ENCODE measurements at regions of chr17 and their contacts with region 1.

Region 1: DNA sequence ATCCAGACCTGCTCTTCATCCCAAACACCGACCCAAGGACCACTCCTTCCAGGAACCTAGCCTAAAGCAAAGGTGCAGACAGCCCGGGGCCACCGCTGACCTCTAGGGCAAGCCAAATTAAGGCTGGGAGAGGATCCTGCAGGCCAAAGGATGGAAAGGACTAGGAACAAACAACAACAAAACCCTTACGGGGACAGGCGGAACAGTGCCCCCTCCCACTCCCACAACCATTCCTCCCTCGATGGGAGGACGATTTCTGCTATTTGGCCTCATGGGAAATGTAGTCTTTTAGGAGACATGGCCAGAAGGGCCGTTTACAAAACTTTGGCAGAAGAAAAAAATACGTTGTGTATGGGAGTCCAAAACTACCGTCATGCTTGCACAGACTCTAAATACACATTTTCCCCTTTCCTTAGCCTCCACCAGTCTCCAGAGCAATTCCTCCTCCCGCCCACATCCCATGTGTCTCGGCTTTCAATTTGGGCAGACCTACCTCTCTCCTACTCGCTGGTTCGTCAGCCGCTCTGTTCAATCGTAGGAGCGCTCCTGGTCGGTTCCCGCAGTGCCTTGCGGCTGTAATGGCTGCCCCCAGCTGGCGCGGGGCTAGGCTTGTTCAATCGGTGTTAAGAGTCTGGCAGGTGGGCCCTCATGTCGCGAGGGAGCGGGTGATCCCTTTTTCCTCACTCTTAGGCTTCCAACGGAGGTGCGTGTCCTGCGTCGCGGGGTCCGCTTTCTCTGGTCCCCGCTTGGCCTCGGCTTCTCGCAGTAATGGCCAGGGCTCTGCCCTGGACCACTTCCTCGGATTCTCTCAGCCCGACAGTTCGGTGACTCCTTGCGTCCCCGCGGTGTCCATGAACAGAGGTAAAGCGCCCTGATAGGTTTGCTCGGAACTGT is at the start of gene ERAL1:
- DNase-seq: peak; percentile 92
- H3K4me3 Mint-ChIP-seq: peak within 1 kb of the TSS; percentile 81
- H3K27ac Mint-ChIP-seq: peak within 1 kb of the TSS; percentile 86
- H3K4me1 Mint-ChIP-seq: peaks cover 23% of the 10 kb centered on the region
- H3K27me3 Mint-ChIP-seq: no peaks in the 10 kb centered on the region
- total RNA-seq, gene ERAL1: 43.0 to 48.5 TPM

Region 2: GRCh38 chr17:28871056-28871579 is 16.4 kb after region 1 on chr17:
- CTCF ChIA-PET with region 1: no interaction called
- POLR2A ChIA-PET with region 1: interaction called, 7 read pairs
- intact Hi-C with region 1: loop called (anchors 2 kb)
- DNase-seq: peak; percentile 79
- H3K4me3 Mint-ChIP-seq: no peak overlapping the region
- H3K27ac Mint-ChIP-seq: peak overlapping the region; percentile 80
- H3K4me1 Mint-ChIP-seq: peaks cover 19% of the 10 kb centered on the region
- H3K27me3 Mint-ChIP-seq: no peaks in the 10 kb centered on the region

Region 3: GRCh38 chr17:29225396-29225795 is 370.7 kb after region 1 on chr17:
- CTCF ChIA-PET with region 1: no interaction called
- POLR2A ChIA-PET with region 1: no interaction called
- intact Hi-C with region 1: no loop called
- DNase-seq: no peak
- H3K4me3 Mint-ChIP-seq: no peak overlapping the region
- H3K27ac Mint-ChIP-seq: no peak overlapping the region
- H3K4me1 Mint-ChIP-seq: peaks cover 4% of the 10 kb centered on the region
- H3K27me3 Mint-ChIP-seq: no peaks in the 10 kb centered on the region

Measured in activated CD4-positive, alpha-beta memory T cell treated with anti-CD3 and anti-CD28 coated beads for 36 hours (primary cell).